Activated CD8-positive, alpha-beta T cell treated with anti-CD3 and anti-CD28 coated beads for 36 hours (primary cell): ENCODE measurements at regions of chr3 and their contacts with region 1.

Region 1: DNA sequence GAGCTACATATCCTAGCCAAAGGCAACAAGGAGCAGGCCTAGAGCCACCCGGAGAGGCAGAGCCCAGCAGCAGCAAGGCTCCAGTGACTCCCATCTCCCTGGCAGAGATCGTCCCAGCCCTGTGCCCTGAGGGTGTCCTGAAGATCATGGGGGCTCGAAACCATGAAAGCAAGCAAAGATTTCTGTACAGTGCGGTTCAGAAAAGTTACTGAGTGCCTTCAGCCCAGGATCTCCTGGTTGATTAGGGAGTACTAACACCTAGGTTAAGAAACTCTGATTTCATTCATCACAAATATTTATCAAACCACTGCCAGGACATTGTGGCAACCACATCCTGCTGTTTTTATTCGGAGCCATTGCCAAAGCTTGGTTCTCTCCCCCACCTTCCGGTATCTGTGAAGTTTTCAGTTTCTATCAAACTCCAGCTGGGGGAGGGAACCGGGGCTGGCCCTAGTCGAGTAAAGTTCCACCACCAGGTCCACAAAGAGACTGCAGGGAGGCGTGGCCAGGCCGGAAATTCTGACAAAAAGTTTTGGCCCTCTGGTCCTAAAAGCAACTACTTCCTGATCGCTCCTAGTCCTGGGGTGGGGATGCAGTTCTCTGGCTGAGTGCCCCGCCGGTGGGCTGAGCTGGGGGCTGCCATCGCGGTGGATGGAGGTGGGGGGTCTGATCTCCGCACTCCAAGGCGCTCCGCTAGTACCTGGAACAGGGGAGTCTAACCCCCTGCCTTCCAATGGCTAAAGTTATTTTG is 1.2 kb downstream of the RAB43 start:
- DNase-seq: peak; percentile 98
- ATAC-seq: peak; percentile 63
- H3K4me3 Mint-ChIP-seq: peak overlapping the region; percentile 88
- H3K27ac Mint-ChIP-seq: peak overlapping the region; percentile 90
- H3K4me1 Mint-ChIP-seq: peaks cover 45% of the 10 kb centered on the region
- H3K27me3 Mint-ChIP-seq: no peaks in the 10 kb centered on the region
- CTCF ChIP-seq: no peak

Region 2: GRCh38 chr3:129016356-129016719 is 104.1 kb before region 1 on chr3:
- CTCF ChIA-PET with region 1: interaction called, 7 read pairs
- POLR2A ChIA-PET with region 1: interaction called, 27 read pairs
- intact Hi-C with region 1: no loop called
- DNase-seq: peak; percentile 82
- ATAC-seq: peak; percentile 85
- H3K4me3 Mint-ChIP-seq: peak overlapping the region; percentile 71
- H3K27ac Mint-ChIP-seq: peak overlapping the region; percentile 97
- H3K4me1 Mint-ChIP-seq: peaks cover 31% of the 10 kb centered on the region
- H3K27me3 Mint-ChIP-seq: no peaks in the 10 kb centered on the region
- CTCF ChIP-seq: peak; percentile 34

Region 3: GRCh38 chr3:129026728-129027543 is 93.5 kb before region 1 on chr3:
- CTCF ChIA-PET with region 1: interaction called, 14 read pairs
- POLR2A ChIA-PET with region 1: interaction called, 9 read pairs
- intact Hi-C with region 1: no loop called
- DNase-seq: peak; percentile 96
- ATAC-seq: peak; percentile 99
- H3K4me3 Mint-ChIP-seq: peak overlapping the region; percentile 73
- H3K27ac Mint-ChIP-seq: peak overlapping the region; percentile 91
- H3K4me1 Mint-ChIP-seq: peaks cover 22% of the 10 kb centered on the region
- H3K27me3 Mint-ChIP-seq: no peaks in the 10 kb centered on the region
- CTCF ChIP-seq: peak; percentile 94

Region 4: GRCh38 chr3:129058441-129059200 is 61.8 kb before region 1 on chr3:
- CTCF ChIA-PET with region 1: interaction called, 44 read pairs
- POLR2A ChIA-PET with region 1: interaction called, 40 read pairs
- intact Hi-C with region 1: loop called (anchors 10 kb)
- DNase-seq: peak; percentile 36
- ATAC-seq: peak; percentile 43
- H3K4me3 Mint-ChIP-seq: no peak overlapping the region
- H3K27ac Mint-ChIP-seq: no peak overlapping the region
- H3K4me1 Mint-ChIP-seq: peaks cover 4% of the 10 kb centered on the region
- H3K27me3 Mint-ChIP-seq: no peaks in the 10 kb centered on the region
- CTCF ChIP-seq: no peak

Region 5: GRCh38 chr3:129132097-129132866 is 11.9 kb after region 1 on chr3:
- CTCF ChIA-PET with region 1: interaction called, 7 read pairs
- POLR2A ChIA-PET with region 1: interaction called, 29 read pairs
- intact Hi-C with region 1: no loop called
- DNase-seq: no peak
- ATAC-seq: peak; percentile 34
- H3K4me3 Mint-ChIP-seq: no peak overlapping the region
- H3K27ac Mint-ChIP-seq: peak overlapping the region; percentile 44
- H3K4me1 Mint-ChIP-seq: peaks cover 12% of the 10 kb centered on the region
- H3K27me3 Mint-ChIP-seq: no peaks in the 10 kb centered on the region
- CTCF ChIP-seq: no peak

Region 6: DNA sequence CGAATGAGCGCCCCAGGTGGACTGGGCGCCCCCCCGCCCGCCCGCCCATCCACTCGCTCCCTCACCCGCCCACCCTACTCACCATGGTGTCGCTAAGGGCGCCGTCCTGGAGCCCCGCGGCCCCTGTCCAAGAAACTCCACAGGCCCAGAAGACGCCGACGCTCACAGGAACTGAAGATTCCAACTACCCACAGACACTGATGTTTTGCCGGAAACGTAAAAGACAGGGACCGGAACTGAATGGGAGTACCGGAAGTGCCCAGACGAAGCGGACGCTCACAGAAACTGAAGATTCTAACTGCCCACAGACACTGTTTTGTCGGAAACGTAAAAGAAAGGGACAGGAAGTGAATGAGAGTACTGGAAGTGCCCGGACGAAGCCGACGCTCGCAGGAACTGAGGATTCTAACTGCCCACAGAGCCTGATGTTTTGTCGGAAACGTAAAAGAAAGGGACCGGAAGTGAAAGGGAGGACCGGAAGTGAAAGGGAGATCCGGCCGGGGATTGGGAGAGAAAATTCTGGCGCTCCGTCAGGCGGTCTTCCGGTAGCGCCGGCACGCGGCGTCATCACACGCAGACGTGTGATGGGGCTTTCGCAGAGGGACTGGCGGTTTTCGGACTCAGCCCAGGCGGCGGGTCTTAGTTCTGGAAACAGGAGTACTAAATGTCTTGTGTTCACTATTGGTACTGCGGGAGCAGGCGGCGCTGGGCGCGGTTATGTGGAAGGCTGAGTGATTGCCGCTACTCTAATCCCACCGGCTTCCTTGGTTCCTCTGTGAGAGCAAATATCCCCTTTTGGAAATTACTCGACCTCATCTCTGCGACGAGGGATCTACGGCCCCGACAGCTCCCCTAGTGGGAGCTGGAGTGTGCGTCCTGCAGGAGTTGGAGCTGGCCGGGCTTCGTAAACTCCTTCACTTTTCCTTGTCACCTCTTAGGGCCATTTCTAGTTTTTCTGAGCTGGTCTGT is 40.7 kb after region 1 on chr3 and contains the start of gene ISY1:
- CTCF ChIA-PET with region 1: interaction called, 16 read pairs
- POLR2A ChIA-PET with region 1: interaction called, 20 read pairs
- intact Hi-C with region 1: no loop called
- DNase-seq: peak; percentile 91
- ATAC-seq: peak; percentile 82
- H3K4me3 Mint-ChIP-seq: peak within 1 kb of the TSS; percentile 88
- H3K27ac Mint-ChIP-seq: peak within 1 kb of the TSS; percentile 98
- H3K4me1 Mint-ChIP-seq: peaks cover 27% of the 10 kb centered on the region
- H3K27me3 Mint-ChIP-seq: no peaks in the 10 kb centered on the region
- CTCF ChIP-seq: peak; percentile 84
- total RNA-seq, gene ISY1: 66.7 to 68.5 TPM

Region 7: GRCh38 chr3:129183569-129184395 is 63.4 kb after region 1 on chr3 and contains the start of gene CNBP:
- CTCF ChIA-PET with region 1: interaction called, 3 read pairs
- POLR2A ChIA-PET with region 1: interaction called, 82 read pairs
- intact Hi-C with region 1: loop called (anchors 5 kb)
- DNase-seq: peak; percentile 94
- ATAC-seq: peak; percentile 94
- H3K4me3 Mint-ChIP-seq: peak within 1 kb of the TSS; percentile 97
- H3K27ac Mint-ChIP-seq: peak within 1 kb of the TSS; percentile 99
- H3K4me1 Mint-ChIP-seq: peaks cover 29% of the 10 kb centered on the region
- H3K27me3 Mint-ChIP-seq: no peaks in the 10 kb centered on the region
- CTCF ChIP-seq: no peak
- total RNA-seq, gene CNBP: 453 to 454 TPM